Psoas muscle (tissue), 8 donors: ENCODE measurements at regions of chr22 and their contacts with region 1.

Region 1: GRCh38 chr22:25702040-25702439 is 39.9 kb upstream of the MYO18B start:
- DNase-seq: no peak
- ATAC-seq: peak in 1 of 4 donors; percentile 68
- H3K4me3 ChIP-seq: no peak overlapping the region
- H3K27ac ChIP-seq: no peak overlapping the region
- H3K4me1 ChIP-seq: peaks cover 11% of the 10 kb centered on the region
- H3K27me3 ChIP-seq: no peaks in the 10 kb centered on the region
- CTCF ChIP-seq: peak; percentile 42

Region 2: DNA sequence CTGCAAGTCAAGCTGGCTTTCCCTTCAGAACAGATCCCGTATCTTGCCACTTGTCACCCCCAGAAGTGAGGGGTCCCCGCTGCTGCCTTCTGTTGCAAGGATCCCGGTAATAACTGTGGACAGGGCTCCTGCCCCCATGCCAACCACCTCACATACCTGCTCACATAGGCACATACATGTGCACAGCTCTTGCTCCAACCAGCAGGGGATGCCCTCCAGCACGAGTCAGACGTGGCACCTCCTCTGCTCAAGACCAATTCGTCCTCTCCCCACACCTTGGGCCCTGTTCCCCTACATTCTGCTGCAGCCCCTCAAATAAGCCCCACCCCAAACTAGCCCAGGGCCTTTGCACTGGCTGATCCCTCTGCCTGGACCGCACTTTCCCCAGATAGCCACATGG is 319.3 kb before region 1 on chr22:
- intact Hi-C with region 1: no loop called
- DNase-seq: no peak
- ATAC-seq: no peak
- H3K4me3 ChIP-seq: no peak overlapping the region
- H3K27ac ChIP-seq: no peak overlapping the region
- H3K4me1 ChIP-seq: no peaks in the 10 kb centered on the region
- H3K27me3 ChIP-seq: no peaks in the 10 kb centered on the region
- CTCF ChIP-seq: no peak

Region 3: DNA sequence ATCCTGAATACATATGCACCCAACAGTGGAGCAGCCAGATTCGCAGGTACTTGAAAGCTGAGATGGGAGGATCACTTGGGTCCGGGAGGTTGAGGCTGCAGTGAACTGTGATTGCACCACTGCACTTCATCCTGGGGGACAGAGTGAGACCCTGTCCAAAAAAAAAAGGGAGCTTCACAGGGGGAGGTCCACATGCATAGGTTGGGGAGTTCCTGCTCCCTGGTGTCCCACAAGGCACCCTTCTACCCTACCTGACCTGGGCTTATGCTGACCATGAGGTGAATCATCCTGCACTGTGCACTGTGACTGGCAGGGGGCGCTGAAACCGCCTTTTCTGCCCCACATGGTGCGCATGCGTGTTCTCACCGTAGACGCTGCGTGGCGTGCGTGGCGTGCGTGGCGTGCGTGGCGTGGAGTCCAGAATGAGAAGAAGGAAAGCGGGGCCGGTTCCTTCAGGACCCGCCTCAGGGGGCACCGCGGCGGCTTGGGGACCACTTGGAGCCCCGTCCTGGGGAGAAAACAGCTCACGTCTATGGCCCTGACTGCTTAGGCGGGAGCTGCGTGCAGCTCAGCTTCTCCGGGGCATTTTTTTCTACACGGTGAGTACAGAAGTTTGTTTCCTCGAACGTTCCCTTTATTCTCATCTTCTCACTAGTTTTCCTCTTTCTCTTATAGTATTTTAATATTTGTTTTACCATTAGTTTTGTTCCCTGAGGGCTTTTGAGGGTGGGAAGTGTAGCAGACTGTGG is 254.2 kb before region 1 on chr22:
- intact Hi-C with region 1: loop called in 1 of 2 experiments (anchors 10 kb)
- DNase-seq: peak; percentile 92 to 96
- ATAC-seq: peak; percentile 98 to 99 (median 99)
- H3K4me3 ChIP-seq: peak overlapping the region; percentile 72
- H3K27ac ChIP-seq: peak overlapping the region; percentile 75
- H3K4me1 ChIP-seq: peaks cover 22% of the 10 kb centered on the region
- H3K27me3 ChIP-seq: no peaks in the 10 kb centered on the region
- CTCF ChIP-seq: peak; percentile 85

Region 4: DNA sequence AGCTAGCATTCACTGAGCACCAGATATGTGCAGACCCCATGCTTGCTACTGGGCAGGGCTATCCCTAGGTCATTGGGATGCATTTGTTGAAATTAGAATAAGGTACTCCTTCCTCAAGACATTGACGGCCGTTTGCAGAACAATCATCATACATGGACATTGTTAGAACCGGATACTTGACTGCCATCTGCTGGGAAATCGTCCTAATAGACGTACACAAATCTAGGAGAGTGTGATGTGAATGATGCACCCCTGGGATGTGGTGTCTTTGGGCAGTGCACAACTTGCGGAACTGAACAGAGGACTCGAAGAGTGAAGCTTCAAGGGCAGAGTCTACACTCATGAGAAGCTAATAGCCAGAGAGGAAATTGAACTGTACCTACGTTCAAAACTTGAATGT is 75.8 kb after region 1 on chr22:
- intact Hi-C with region 1: loop called in 1 of 2 experiments (anchors 5 kb)
- DNase-seq: peak in 1 of 2 donors; percentile 35
- ATAC-seq: peak in 3 of 4 donors; percentile 17 to 43 (median 19)
- H3K4me3 ChIP-seq: no peak overlapping the region
- H3K27ac ChIP-seq: no peak overlapping the region
- H3K4me1 ChIP-seq: no peaks in the 10 kb centered on the region
- H3K27me3 ChIP-seq: no peaks in the 10 kb centered on the region
- CTCF ChIP-seq: peak; percentile 14